Mammary epithelial cell (primary cell): ENCODE measurements at regions of chr1 and their contacts with region 1.

Region 1: DNA sequence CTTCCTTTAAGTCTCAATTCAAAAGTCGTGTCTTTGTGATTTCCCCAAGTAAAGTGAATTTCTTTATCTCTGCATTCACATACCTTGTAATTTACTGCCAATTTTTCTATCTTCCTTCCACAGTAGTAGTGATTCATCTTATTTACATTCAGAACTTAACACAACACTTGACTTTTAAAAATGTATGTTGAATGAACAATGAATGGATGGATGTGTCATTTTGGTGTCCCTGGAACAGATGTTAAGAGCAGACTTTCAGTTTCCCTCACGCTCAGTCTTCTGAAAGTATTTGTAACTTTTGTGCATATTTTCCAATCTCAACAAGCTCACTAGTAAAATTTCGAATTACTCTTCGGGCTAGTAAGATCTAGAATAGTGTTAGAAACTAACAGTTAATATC is 352.0 kb downstream of the HHIPL2 start:
- DNase-seq: no peak
- H3K4me3 ChIP-seq: no peak overlapping the region
- H3K27ac ChIP-seq: no peak overlapping the region
- H3K4me1 ChIP-seq: no peaks in the 10 kb centered on the region
- H3K27me3 ChIP-seq: no peaks in the 10 kb centered on the region
- CTCF ChIP-seq: no peak

Region 2: DNA sequence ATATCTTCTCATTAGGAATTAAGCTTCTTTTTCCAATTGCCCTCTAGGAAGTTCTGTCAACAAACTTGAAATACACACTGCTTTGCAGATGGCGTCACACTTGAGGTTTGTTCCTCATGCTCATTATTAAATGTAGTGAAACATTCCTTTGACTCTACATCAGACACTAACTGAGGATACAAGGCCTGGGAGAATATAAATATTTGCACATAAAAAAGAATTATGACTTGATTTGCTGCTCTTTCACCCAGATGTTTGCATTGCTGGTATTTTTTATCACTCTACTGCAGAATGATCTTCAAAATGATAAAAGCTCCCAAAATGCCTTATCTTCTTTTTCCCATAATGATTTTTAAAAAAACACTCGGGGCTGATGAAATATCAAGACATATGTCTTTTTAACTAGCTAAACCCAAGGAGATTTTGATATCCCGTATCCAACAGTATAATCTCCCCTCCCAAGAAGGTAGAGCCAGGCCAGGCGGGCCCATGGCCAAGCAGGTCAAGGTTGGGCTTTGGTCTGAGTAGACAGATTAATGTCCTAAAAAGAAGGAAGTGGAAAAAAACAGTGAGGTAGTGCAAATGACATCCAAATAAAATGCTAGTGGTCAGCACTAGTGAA is 87.4 kb after region 1 on chr1:
- CTCF ChIA-PET with region 1: no interaction called
- dilution Hi-C with region 1: loop called (anchors 5 kb)
- in situ Hi-C with region 1: no loop called
- intact Hi-C with region 1: no loop called
- DNase-seq: no peak
- H3K4me3 ChIP-seq: no peak overlapping the region
- H3K27ac ChIP-seq: no peak overlapping the region
- H3K4me1 ChIP-seq: peaks cover 10% of the 10 kb centered on the region
- H3K27me3 ChIP-seq: no peaks in the 10 kb centered on the region
- CTCF ChIP-seq: no peak